ENCODE measurements at regions of chr10 and their contacts with region 1.

Region 1: DNA sequence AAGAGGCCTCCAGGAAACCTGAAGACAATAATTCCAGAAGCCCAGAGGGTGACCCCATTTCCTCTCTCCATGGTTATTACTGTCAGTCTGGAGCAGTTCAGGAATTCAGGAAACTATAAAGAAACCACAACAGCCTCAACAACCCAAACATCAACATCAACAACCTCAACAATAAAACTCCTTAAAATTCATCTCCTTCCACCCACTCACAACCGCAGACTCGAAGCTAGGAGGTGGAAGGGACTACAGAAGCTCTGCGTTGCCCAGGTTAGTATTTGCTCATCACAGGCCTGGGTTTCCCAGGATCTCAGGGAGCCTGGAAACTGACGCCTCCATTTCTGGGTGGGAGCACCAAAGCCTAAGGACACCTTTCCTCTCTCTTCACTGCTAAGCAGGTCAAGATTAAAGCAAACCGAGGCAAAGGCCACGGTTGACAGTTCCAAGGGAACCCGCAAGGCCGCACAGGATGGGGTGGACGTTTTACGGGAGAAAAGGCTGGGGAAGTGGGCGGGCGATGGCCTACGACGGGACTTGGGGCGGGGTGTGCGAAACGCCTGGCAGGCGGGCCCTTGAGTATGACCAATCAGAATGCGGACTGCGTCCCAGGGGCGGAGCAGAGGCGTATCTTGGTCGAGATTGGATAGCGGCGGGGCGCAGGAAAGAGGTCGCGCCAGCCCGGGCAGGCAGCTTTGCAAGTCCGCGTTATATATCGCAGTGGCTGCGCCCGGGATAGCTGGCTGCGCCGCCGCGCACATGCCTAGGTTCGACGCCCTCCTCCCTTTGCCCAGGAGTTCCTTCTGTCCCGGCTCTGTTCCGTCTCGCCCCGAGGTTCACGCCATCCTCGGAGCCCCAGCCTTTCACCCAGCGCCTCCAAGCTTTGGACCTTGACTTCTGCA is at the start of gene ELOVL3:
- DNase-seq: peak; percentile 91 to 92
- H3K4me3 ChIP-seq: peak within 1 kb of the TSS; percentile 17 to 50 (median 26); a peak in 5 of 8 replicates
- H3K27ac ChIP-seq: no peak within 1 kb of the TSS
- H3K4me1 ChIP-seq: peaks cover 0 to 4% (median 0%) of the 10 kb centered on the region in 4 experiments; a peak in 3 of 7 replicates
- H3K27me3 ChIP-seq: peaks cover 28 to 55% (median 49%) of the 10 kb centered on the region in 4 experiments
- CTCF ChIP-seq: no peak
- EP300 ChIP-seq: peak in 1 of 2 experiments; percentile 6; a peak in 1 of 3 replicates
- POLR2A ChIP-seq: no peak
- RAD21 ChIP-seq: no peak
- total RNA-seq, gene ELOVL3: 0.31 TPM in 1 of 2 replicates, not detected in the other

Region 2: GRCh38 chr10:102245101-102245931 is 19.4 kb after region 1 on chr10 and contains the start of gene GBF1:
- CTCF ChIA-PET with region 1: interaction called, 54 read pairs
- POLR2A ChIA-PET with region 1: interaction called, 15 read pairs
- DNase-seq: peak; percentile 88 to 90
- H3K4me3 ChIP-seq: peak within 1 kb of the TSS; percentile 86 to 98 (median 92)
- H3K27ac ChIP-seq: peak within 1 kb of the TSS; percentile 43; the same call in 1 of the 2 replicates
- H3K4me1 ChIP-seq: peaks cover 4 to 16% (median 7%) of the 10 kb centered on the region in 4 experiments
- H3K27me3 ChIP-seq: peaks cover 20 to 32% (median 25%) of the 10 kb centered on the region in 4 experiments
- CTCF ChIP-seq: no peak
- EP300 ChIP-seq: no peak
- POLR2A ChIP-seq: peak in 1 of 2 experiments; percentile 78; a peak in 2 of 3 replicates
- RAD21 ChIP-seq: no peak
- total RNA-seq, gene GBF1: 24.4 and 25.5 TPM in 2 replicates

Region 3: DNA sequence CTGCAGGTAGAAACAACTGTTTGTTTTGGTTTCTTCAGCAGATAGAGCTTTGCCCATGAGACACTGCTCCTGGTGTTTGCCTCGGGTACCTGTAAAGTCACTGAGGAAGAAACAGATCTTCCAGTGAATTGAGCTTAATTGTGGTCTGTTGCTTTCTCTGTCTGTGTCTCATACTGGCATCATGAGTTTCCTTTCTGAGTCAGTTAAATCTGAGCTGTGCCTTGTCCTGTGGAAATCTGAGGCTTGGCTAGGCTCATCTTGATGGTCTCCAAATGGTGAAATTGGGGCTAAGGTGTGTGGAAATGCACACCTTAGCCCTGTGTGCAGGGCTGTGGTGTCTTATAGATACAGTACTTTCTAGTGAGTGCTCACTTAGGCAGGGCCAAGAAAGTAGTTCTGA is 86.8 kb after region 1 on chr10:
- CTCF ChIA-PET with region 1: interaction called, 14 read pairs
- POLR2A ChIA-PET with region 1: no interaction called
- DNase-seq: no peak
- H3K4me3 ChIP-seq: no peak overlapping the region
- H3K27ac ChIP-seq: no peak overlapping the region
- H3K4me1 ChIP-seq: peaks cover 0 to 3% (median 0%) of the 10 kb centered on the region in 4 experiments; a peak in 1 of 7 replicates
- H3K27me3 ChIP-seq: no peaks in the 10 kb centered on the region
- CTCF ChIP-seq: no peak
- EP300 ChIP-seq: no peak
- POLR2A ChIP-seq: no peak
- RAD21 ChIP-seq: no peak

Region 4: DNA sequence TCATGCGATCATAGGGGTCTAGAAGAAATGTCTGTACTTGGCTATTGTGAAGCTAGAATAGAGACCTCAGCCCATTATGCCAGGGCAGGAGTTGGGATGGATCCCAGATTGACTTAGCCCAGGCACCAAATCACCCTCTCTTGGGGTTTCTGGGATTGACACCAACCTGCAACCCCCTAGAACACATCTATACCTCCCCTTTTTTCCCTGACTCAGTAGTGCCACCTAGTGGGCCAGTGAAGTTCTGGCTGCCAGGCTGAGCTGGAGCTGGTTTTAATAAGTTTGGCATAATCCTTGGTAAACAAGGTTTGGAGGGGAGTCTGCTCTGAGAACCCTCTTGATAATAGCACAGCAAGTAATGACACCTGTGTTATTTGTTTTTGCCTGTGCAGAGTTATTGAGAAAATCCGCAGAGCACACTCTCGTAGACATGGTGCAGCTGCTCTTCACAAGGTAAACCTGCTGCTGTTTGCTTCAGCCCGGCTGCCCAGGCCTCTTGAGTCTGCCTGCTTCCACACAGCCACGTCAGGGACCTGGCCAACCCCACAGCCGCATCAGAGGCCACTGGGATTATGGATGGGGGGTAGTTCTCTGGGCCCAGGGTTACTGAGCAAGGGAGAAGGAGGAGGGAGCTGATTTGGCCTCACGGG is 126.3 kb after region 1 on chr10:
- CTCF ChIA-PET with region 1: interaction called, 862 read pairs
- POLR2A ChIA-PET with region 1: interaction called, 6 read pairs
- DNase-seq: peak in 1 of 2 experiments; percentile 86
- H3K4me3 ChIP-seq: no peak overlapping the region
- H3K27ac ChIP-seq: no peak overlapping the region
- H3K4me1 ChIP-seq: no peaks in the 10 kb centered on the region
- H3K27me3 ChIP-seq: no peaks in the 10 kb centered on the region; a peak in 1 of 7 replicates
- CTCF ChIP-seq: peak; percentile 77 to 94 (median 91)
- EP300 ChIP-seq: no peak
- POLR2A ChIP-seq: no peak
- RAD21 ChIP-seq: peak; percentile 84 to 90

Region 5: GRCh38 chr10:102384053-102384452 is 158.2 kb after region 1 on chr10:
- CTCF ChIA-PET with region 1: interaction called, 95 read pairs
- POLR2A ChIA-PET with region 1: interaction called, 4 read pairs
- DNase-seq: peak in 1 of 2 experiments; percentile 63
- H3K4me3 ChIP-seq: no peak overlapping the region
- H3K27ac ChIP-seq: no peak overlapping the region
- H3K4me1 ChIP-seq: 0 out of 7 replicates have a peak, but pooled peaks cover 0 to 2% (median 0%) of the 10 kb centered on the region in 4 experiments
- H3K27me3 ChIP-seq: no peaks in the 10 kb centered on the region
- CTCF ChIP-seq: peak; percentile 83 to 87 (median 84)
- EP300 ChIP-seq: no peak
- POLR2A ChIP-seq: no peak
- RAD21 ChIP-seq: peak; percentile 66 to 72

Region 6: DNA sequence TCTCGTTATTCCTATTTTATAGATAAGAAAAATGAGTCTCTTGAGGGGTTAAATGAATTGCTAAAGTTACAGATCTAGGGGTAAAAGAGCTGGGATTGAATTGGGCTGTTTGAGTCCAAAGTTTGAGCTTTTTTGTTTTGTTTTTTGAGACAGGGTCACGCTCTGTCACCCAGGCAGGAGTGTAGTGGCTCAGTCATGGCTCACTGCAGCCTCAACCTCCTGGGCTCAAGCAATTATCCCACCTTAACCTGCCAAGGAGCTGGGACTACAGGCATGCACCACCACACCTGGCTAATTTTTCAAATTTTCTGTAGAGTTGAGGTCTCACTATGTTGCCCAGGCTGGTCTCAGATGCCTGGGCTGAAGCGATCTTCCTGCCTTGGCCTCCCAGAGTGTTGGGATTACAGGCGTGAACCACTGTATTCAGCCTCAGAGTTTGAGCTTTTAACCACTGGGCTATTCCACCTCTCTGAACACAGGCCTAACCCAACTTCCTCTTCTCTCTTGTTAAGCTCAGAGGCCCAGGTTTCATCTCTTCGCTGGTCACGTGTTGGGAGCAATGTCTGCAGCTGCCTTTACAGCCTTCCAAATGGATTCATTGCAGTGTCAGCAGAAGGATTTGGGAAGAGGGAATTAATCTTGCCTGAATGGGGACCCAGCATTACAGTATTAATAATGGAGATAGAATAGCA is 285.8 kb after region 1 on chr10:
- CTCF ChIA-PET with region 1: no interaction called
- POLR2A ChIA-PET with region 1: no interaction called
- DNase-seq: no peak
- H3K4me3 ChIP-seq: no peak overlapping the region
- H3K27ac ChIP-seq: no peak overlapping the region
- H3K4me1 ChIP-seq: no peaks in the 10 kb centered on the region
- H3K27me3 ChIP-seq: no peaks in the 10 kb centered on the region
- CTCF ChIP-seq: no peak
- EP300 ChIP-seq: no peak
- POLR2A ChIP-seq: no peak
- RAD21 ChIP-seq: no peak

Measured in H1 (cell line).